CD4-positive, alpha-beta T cell (primary cell): ENCODE measurements at regions of chr1 and their contacts with region 1.

Region 1: DNA sequence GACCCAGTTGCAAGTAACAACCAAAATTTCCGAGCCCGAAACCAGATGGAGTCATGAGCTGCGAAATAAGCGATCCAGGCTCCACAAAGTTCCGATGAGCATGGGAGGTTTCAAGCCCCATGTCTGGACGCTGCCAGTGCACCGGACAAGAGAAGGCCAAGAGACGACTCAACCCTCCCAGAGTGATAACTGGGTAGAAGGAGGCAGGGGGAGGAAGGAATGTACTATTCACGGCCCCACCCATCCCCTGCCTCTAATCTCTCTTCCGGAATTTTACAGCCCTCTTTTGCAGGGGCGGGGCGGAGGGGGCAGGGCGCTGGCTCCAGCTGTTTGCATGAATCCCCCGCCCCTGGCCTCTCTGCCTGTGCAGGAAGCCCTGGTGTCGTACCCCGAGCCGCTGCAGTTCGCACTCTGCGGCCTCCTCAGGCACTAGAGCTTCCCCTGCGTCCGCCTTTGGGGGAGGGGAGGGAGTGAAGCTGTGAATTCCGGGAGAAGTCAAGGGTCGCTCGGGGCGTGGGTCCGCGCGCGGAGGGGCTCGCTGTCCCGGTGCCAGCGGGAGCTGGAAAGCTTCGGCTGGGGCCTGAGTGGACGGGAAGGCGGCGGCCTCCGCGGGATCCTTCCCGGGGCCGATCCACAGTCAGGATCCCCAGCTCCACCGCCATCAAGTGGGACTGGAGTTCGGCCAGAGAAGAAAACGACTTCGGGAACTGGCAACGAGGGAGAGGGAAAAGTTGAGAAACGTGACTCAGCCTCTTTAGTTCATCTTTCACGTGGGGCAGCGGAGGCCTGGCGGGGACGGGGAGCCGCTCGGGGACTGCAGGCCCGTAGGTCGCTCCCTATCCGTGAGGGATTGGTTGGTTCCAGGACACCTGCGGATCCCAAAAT is 6.3 kb upstream of the PTP4A2 start:
- DNase-seq: peak; percentile 60 to 96 (median 85)
- ATAC-seq: peak; percentile 64
- H3K4me3 ChIP-seq: peak overlapping the region; percentile 58
- H3K4me3 Mint-ChIP-seq: peak overlapping the region; percentile 89
- H3K27ac ChIP-seq: peak overlapping the region; percentile 53 to 83
- H3K27ac Mint-ChIP-seq: peak overlapping the region; percentile 95
- H3K4me1 ChIP-seq: peaks cover 67% of the 10 kb centered on the region
- H3K4me1 Mint-ChIP-seq: peaks cover 54% of the 10 kb centered on the region
- H3K27me3 ChIP-seq: no peaks in the 10 kb centered on the region
- H3K27me3 Mint-ChIP-seq: no peaks in the 10 kb centered on the region
- CTCF ChIP-seq: no peak

Region 2: GRCh38 chr1:31831397-31832378 is 112.8 kb before region 1 on chr1:
- CTCF ChIA-PET with region 1: no interaction called
- POLR2A ChIA-PET with region 1: interaction called, 19 read pairs
- intact Hi-C with region 1: loop called (anchors 5 kb)
- DNase-seq: no peak
- ATAC-seq: no peak
- H3K4me3 ChIP-seq: no peak overlapping the region
- H3K4me3 Mint-ChIP-seq: no peak overlapping the region
- H3K27ac ChIP-seq: no peak overlapping the region
- H3K27ac Mint-ChIP-seq: no peak overlapping the region
- H3K4me1 ChIP-seq: peaks cover 35% of the 10 kb centered on the region
- H3K4me1 Mint-ChIP-seq: peaks cover 44% of the 10 kb centered on the region
- H3K27me3 ChIP-seq: no peaks in the 10 kb centered on the region
- H3K27me3 Mint-ChIP-seq: no peaks in the 10 kb centered on the region
- CTCF ChIP-seq: no peak

Region 3: DNA sequence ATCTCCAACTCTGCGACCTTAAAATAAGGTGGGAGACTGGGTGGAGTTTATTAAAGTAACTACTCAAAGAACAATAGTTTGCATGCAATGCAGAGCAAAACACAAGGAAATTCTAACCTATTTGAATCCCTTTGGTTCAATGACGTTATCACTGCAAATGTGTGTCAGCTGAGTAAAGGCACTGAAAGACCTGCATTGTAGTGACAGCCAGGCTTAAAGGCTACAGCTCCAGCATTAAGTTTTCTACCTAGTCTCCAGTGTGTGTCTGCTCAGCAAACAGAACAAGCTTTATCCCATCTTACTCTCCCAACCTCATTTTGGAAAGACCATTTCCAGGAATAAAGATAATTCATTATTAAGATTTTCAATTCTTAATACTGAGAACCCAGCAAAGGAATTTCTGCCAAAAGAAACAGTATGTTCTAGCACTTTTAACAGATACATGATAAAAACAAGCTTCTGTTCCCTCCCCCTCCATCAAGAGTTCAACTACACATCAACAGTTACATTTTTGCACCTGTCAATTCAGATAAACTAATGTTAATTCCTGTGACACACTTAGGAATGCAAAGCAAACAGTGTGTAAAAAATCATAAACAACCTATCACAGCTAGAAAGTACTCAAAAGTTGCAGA is 20.4 kb before region 1 on chr1:
- CTCF ChIA-PET with region 1: interaction called, 15 read pairs
- POLR2A ChIA-PET with region 1: interaction called, 103 read pairs
- intact Hi-C with region 1: loop called in 1 of 2 experiments (anchors 2 kb)
- DNase-seq: peak in 2 of 14 experiments; percentile 38 to 56
- ATAC-seq: peak; percentile 56
- H3K4me3 ChIP-seq: no peak overlapping the region
- H3K4me3 Mint-ChIP-seq: peak overlapping the region; percentile 76
- H3K27ac ChIP-seq: no peak overlapping the region
- H3K27ac Mint-ChIP-seq: peak overlapping the region; percentile 90
- H3K4me1 ChIP-seq: peaks cover 59% of the 10 kb centered on the region
- H3K4me1 Mint-ChIP-seq: peaks cover 81% of the 10 kb centered on the region
- H3K27me3 ChIP-seq: no peaks in the 10 kb centered on the region
- H3K27me3 Mint-ChIP-seq: no peaks in the 10 kb centered on the region
- CTCF ChIP-seq: no peak

Region 4: DNA sequence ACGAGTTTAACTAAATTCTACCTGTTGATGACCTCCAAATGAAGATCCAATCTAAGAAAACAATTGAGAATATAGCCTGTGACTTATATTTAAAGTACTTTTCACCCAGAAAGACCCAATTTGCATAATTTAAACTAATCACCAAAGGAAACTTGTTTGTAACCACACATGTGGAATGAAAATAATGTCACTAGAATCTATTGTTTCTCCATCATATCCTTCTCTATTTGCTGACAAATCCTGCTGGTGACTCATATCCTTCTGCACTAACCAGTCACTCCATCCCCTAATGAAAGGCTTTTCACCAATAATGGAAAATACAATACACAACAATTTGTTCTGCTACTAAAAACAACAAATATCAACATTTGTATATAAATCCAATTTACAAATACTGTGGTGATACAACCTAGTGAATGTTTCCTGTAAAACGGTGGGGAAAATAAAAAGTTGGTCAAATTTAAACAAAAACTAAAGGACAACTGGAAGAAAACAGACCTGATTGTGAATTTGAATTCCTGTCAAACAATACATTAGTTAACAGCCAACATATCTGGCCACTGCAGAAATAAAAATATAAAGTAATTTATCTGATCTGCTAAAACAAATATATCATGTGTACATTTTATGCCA is 12.7 kb before region 1 on chr1:
- CTCF ChIA-PET with region 1: interaction called, 8 read pairs
- POLR2A ChIA-PET with region 1: interaction called, 413 read pairs
- intact Hi-C with region 1: no loop called
- DNase-seq: peak in 3 of 14 experiments; percentile 49 to 68 (median 56)
- ATAC-seq: no peak
- H3K4me3 ChIP-seq: peak overlapping the region; percentile 34
- H3K4me3 Mint-ChIP-seq: peak overlapping the region; percentile 81
- H3K27ac ChIP-seq: peak overlapping the region; percentile 5 to 68
- H3K27ac Mint-ChIP-seq: peak overlapping the region; percentile 90
- H3K4me1 ChIP-seq: peaks cover 60% of the 10 kb centered on the region
- H3K4me1 Mint-ChIP-seq: peaks cover 89% of the 10 kb centered on the region
- H3K27me3 ChIP-seq: no peaks in the 10 kb centered on the region
- H3K27me3 Mint-ChIP-seq: no peaks in the 10 kb centered on the region
- CTCF ChIP-seq: no peak